Spleen (tissue), 13 donors: ENCODE measurements at regions of chr2 and their contacts with region 1.

Region 1: GRCh38 chr2:55168221-55169154 is 63.6 kb downstream of the CLHC1 start:
- DNase-seq: no peak
- H3K4me3 ChIP-seq: no peak overlapping the region
- H3K27ac ChIP-seq: peak overlapping the region in 2 of 8 donors; percentile 15 to 21
- H3K4me1 ChIP-seq: peaks cover 0 to 15% (median 3%) of the 10 kb centered on the region in 6 donors
- H3K27me3 ChIP-seq: no peaks in the 10 kb centered on the region
- CTCF ChIP-seq: peak; percentile 41 to 86 (median 66)
- POLR2A ChIP-seq: no peak

Region 2: DNA sequence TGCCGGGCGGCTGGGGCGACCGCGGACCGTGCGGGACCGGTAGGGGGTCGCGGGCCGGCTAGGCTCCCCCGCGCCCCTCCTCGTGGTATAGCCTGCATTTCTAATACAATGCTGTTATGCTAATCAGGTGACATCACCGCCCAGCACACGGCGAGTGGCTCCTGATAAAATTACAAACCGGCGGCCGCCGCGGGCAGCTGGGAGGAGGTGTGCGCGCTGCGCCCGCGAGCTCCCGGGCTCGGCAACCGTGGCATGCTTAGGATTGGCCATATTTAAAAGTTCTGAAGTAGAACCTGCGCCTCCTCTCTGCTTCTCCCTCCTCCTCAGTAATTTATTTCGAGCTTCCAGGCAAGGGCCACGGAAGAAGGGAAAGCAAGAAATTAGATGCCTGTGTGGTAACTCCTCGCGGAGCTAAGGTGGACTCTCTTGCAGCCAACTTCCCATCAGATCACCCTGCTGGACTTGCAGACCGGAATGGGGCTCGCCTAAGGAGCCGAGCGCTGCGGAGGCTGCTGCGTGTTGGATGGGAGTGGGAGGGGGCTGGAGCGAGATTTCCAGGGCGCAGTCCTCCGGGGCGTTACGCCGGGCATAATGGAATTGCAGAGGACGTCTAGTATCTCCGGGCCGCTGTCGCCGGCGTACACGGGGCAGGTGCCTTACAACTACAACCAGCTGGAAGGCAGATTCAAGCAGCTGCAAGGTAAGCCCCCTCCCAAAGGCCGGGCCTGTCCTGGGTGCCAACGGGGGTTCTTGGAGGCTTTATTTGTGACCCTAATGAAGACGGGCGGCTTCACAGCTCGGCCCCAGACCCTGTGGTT is 610.1 kb before region 1 on chr2:
- intact Hi-C with region 1: no loop called
- DNase-seq: peak; percentile 93
- H3K4me3 ChIP-seq: peak overlapping the region; percentile 61 to 78 (median 65)
- H3K27ac ChIP-seq: peak overlapping the region; percentile 83 to 96 (median 93)
- H3K4me1 ChIP-seq: peaks cover 32 to 94% (median 66%) of the 10 kb centered on the region in 6 donors
- H3K27me3 ChIP-seq: no peaks in the 10 kb centered on the region
- CTCF ChIP-seq: no peak
- POLR2A ChIP-seq: peak in 1 of 3 donors; percentile 40

Region 3: DNA sequence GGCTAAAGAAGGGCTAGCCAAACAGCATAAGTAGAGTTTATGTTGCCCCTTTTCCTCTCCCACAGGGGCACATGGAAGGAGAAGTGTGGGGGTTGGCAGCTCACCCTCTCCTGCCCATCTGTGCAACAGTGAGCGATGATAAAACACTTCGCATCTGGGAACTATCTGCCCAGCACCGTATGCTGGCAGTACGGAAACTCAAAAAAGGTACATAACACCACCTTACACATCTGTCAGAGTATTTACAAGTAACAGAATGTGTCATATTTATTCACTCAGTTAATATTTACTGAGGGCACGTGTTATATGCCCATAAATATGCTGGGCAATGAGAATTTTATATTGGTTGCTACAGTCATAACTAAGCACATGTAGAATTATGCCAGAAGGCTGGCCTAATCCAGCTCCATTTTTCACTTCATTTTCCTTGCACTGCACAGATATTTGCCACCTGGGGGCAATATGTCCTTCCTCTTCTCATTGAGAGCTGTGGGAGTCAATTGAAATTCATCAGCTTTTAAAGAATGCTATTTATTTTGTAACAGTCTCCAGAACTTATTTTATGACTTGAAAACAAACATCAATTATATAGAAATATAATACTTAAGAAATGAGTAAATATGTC is 268.8 kb before region 1 on chr2:
- intact Hi-C with region 1: loop called (anchors 5 kb)
- DNase-seq: no peak
- H3K4me3 ChIP-seq: no peak overlapping the region
- H3K27ac ChIP-seq: no peak overlapping the region
- H3K4me1 ChIP-seq: no peaks in the 10 kb centered on the region
- H3K27me3 ChIP-seq: no peaks in the 10 kb centered on the region
- CTCF ChIP-seq: peak in 9 of 11 experiments; percentile 9 to 57 (median 35)
- POLR2A ChIP-seq: no peak

Region 4: DNA sequence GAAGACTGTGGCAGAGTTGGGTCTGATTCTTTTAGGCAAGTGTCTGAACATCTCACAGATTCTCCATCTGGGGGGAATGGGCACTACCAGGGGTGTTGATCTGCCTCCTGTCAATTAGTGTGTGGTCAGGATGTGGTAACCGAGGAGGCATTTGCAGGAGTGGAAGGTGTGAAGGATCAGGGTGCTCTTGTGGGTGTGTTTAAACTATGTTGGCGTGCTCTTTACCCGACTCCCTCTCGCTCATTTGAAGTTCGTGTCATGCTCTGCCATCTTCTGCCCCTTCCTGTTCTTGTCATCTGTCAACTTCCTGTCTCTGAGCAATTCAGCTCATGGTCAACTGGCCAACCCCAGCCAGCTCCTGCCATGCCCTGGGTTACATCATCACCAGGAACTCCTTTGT is 226.1 kb before region 1 on chr2:
- intact Hi-C with region 1: no loop called
- DNase-seq: peak; percentile 57
- H3K4me3 ChIP-seq: no peak overlapping the region
- H3K27ac ChIP-seq: peak overlapping the region in 3 of 8 donors; percentile 2 to 42 (median 16)
- H3K4me1 ChIP-seq: no peaks in the 10 kb centered on the region
- H3K27me3 ChIP-seq: no peaks in the 10 kb centered on the region
- CTCF ChIP-seq: no peak
- POLR2A ChIP-seq: no peak

Region 5: GRCh38 chr2:55014962-55015939 is 153.2 kb before region 1 on chr2:
- intact Hi-C with region 1: loop called (anchors 5 kb)
- DNase-seq: no peak
- H3K4me3 ChIP-seq: no peak overlapping the region
- H3K27ac ChIP-seq: no peak overlapping the region
- H3K4me1 ChIP-seq: peaks cover 18 to 100% (median 87%) of the 10 kb centered on the region in 6 donors
- H3K27me3 ChIP-seq: no peaks in the 10 kb centered on the region
- CTCF ChIP-seq: peak; percentile 4 to 67 (median 55)
- POLR2A ChIP-seq: no peak

Region 6: GRCh38 chr2:55311444-55311870 is 143.0 kb after region 1 on chr2:
- intact Hi-C with region 1: no loop called
- DNase-seq: no peak
- H3K4me3 ChIP-seq: no peak overlapping the region
- H3K27ac ChIP-seq: no peak overlapping the region
- H3K4me1 ChIP-seq: peaks cover 0 to 5% (median 0%) of the 10 kb centered on the region in 6 donors
- H3K27me3 ChIP-seq: no peaks in the 10 kb centered on the region
- CTCF ChIP-seq: no peak
- POLR2A ChIP-seq: no peak

Region 7: GRCh38 chr2:55595536-55595935 is 427.0 kb after region 1 on chr2:
- intact Hi-C with region 1: no loop called
- DNase-seq: no peak
- H3K4me3 ChIP-seq: no peak overlapping the region
- H3K27ac ChIP-seq: no peak overlapping the region
- H3K4me1 ChIP-seq: peaks cover 2 to 61% (median 16%) of the 10 kb centered on the region in 6 donors
- H3K27me3 ChIP-seq: no peaks in the 10 kb centered on the region
- CTCF ChIP-seq: no peak
- POLR2A ChIP-seq: no peak